Lower lobe of right lung (tissue), 2 donors: ENCODE measurements at regions of chr12 and their contacts with region 1.

Region 1: GRCh38 chr12:78002878-78003277 is 172.2 kb downstream of the NAV3 start:
- DNase-seq: no peak
- ATAC-seq: no peak
- H3K4me3 ChIP-seq: no peak overlapping the region
- H3K27ac ChIP-seq: no peak overlapping the region
- H3K4me1 ChIP-seq: no peaks in the 10 kb centered on the region
- H3K27me3 ChIP-seq: no peaks in the 10 kb centered on the region
- CTCF ChIP-seq: no peak

Region 2: DNA sequence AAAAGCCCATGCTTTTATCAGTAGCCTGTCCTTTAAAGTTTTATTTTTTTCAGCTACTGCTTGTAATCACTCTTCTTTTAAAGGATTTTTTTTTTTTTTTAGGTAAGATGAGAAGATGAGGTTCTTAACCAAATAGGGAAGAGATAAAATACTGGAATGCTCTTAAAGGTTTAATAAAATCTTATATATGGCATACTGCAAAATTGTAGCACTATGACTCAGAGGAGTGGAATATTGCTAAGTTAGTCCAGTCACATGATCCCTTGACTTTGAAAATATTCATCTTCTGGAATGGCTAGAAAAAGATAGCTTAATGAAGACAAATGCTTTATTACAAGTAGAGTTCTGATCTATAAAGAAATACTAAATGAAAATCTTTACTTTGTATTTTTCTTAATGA is 55.6 kb before region 1 on chr12:
- intact Hi-C with region 1: no loop called
- DNase-seq: no peak
- ATAC-seq: no peak
- H3K4me3 ChIP-seq: no peak overlapping the region
- H3K27ac ChIP-seq: no peak overlapping the region
- H3K4me1 ChIP-seq: no peaks in the 10 kb centered on the region
- H3K27me3 ChIP-seq: no peaks in the 10 kb centered on the region
- CTCF ChIP-seq: no peak

Region 3: DNA sequence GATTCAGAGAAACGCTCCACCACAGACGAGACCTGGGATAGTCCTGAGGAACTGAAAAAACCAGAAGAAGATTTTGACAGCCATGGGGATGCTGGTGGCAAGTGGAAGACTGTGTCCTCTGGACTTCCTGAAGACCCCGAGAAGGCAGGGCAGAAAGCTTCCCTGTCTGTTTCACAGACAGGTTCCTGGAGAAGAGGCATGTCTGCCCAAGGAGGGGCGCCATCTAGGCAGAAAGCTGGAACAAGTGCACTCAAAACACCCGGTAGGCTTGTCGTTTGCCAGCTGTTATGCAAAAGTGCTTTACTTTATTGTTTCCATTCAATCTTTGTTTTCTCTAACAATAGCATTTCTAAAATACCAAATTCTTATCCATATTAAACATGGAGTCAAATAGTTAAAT is 115.2 kb after region 1 on chr12:
- intact Hi-C with region 1: loop called (anchors 5 kb)
- DNase-seq: no peak
- ATAC-seq: no peak
- H3K4me3 ChIP-seq: no peak overlapping the region
- H3K27ac ChIP-seq: no peak overlapping the region
- H3K4me1 ChIP-seq: no peaks in the 10 kb centered on the region
- H3K27me3 ChIP-seq: no peaks in the 10 kb centered on the region
- CTCF ChIP-seq: no peak